AG04449 (cell line): ENCODE measurements at regions of chr6 and their contacts with region 1.

Region 1: DNA sequence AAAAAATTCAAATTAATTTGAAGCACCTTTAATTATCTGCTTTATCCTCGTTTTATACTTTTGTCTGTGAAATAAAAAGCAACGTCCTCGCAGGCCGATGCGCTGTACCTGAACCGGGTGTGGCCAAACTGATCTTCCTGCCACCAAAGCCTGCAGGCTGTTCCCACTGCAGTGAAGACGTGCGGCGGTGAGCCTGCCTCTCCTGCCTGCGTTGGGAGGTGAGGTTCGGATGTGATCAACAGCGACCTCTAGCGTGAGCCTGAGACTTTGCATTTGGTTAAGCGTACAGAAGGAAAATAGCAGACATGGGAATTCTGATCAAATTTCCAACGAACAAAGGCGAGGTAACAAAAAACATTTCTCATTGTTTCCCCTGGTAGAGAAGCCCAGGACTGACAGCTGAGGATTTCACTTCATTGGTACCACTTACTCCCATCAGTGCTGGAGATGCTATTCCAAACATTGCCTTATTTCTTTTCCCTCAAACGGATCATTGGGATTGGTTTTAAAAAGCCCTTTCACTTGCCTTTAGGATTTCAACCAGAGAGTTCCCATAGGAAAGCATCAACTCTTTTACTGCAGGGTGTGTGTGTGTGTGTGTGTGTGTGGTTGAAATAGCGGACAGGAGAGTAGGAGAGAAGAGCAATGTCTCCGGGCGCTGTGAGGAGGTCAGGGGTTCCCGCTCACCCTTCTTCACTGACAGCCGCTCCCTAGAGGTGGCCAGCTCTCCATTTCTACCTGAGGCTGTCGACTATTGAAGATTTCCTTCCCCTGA is 56.6 kb upstream of the CCN6 start:
- DNase-seq: no peak
- H3K4me3 ChIP-seq: no peak overlapping the region
- CTCF ChIP-seq: peak; percentile 83

Region 2: GRCh38 chr6:111938716-111939115 is 58.5 kb before region 1 on chr6:
- CTCF ChIA-PET with region 1: no interaction called
- POLR2A ChIA-PET with region 1: no interaction called
- DNase-seq: no peak
- H3K4me3 ChIP-seq: no peak overlapping the region
- CTCF ChIP-seq: no peak

Region 3: GRCh38 chr6:111957623-111958315 is 39.5 kb before region 1 on chr6:
- CTCF ChIA-PET with region 1: no interaction called
- POLR2A ChIA-PET with region 1: no interaction called
- DNase-seq: no peak
- H3K4me3 ChIP-seq: no peak overlapping the region
- CTCF ChIP-seq: no peak

Region 4: GRCh38 chr6:111973118-111973761 is 24.0 kb before region 1 on chr6:
- CTCF ChIA-PET with region 1: interaction called, 11 read pairs
- POLR2A ChIA-PET with region 1: no interaction called
- DNase-seq: peak; percentile 92
- H3K4me3 ChIP-seq: peak overlapping the region; percentile 36
- CTCF ChIP-seq: no peak

Region 5: GRCh38 chr6:112010328-112010727 is 13.1 kb after region 1 on chr6:
- CTCF ChIA-PET with region 1: interaction called, 72 read pairs
- POLR2A ChIA-PET with region 1: no interaction called
- DNase-seq: no peak
- H3K4me3 ChIP-seq: no peak overlapping the region
- CTCF ChIP-seq: no peak

Region 6: DNA sequence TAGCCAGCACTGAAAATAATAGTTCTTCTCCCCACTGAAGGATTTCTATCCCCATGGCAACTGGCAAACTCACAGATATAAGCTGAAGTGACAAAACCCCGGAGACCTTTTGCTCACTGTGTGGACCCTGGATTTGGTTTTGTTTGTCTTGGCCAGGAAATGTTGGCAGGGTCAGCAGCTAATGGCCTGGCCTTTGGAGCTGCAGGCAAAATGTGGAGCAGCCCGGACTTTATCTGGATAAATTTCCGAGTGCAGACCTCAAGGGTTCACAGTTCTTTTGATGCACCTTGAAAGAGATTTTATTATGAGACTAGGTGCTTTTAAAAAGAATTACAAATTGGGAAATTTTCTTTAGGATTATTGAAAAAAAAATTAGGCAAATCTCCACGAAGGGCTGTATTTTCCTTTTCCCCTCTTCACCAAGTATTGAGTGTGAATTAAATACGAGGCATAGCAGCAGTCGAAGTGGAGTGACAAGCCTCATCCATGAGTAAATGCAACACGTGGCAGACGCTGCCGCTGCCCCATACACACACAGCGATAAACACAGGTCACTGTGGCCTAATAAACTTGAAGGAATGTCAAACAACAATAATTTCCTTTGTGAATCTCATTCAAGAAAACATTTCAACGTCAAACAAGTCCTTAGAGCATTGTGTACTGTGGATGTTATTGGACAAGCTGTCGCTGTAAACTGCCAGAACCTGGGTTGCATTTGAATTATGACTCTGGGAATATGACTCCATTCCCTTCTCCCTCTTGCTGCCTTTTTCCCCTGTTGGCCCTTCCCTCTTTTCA is 21.6 kb after region 1 on chr6:
- CTCF ChIA-PET with region 1: interaction called, 28 read pairs
- POLR2A ChIA-PET with region 1: no interaction called
- DNase-seq: no peak
- H3K4me3 ChIP-seq: no peak overlapping the region
- CTCF ChIP-seq: no peak

Region 7: DNA sequence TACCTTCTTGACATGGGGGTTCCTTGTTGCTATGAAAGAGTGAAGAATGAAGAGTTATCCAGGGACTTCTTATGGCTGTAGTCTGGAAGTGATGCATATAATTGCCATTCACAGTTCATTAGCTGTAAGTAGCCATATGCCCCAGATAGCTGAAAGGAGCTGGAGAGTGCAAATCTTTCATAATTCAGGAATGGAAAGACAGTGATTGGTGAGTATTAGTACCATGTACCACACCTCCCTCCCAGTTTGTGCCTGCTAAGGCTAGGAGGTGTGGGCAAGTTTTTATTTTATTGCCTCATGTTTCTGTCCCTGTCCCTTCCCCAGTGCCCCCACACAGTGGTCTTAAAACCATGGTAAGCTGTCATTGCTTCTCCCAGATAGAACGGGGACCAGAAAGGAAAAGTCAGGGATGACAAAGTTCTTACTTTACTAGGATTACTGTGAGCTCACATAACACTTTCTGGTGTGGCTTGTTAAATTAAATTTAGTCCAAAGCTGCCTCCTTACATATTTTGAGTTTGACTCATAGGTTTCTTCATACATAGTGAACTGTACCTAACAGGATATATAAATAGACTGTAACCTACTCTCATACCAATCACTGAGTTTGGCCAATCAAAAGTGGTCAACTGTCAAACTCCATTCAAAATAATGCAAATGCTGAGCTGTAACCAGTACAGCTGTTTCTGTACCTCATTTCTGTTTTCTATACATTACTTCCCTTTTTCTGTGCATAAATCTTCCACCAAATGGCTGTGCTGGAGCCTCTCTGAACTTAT is 469.3 kb after region 1 on chr6:
- CTCF ChIA-PET with region 1: no interaction called
- POLR2A ChIA-PET with region 1: no interaction called
- DNase-seq: peak; percentile 61
- H3K4me3 ChIP-seq: no peak overlapping the region
- CTCF ChIP-seq: no peak